HepG2 (cell line): ENCODE measurements at regions of chr7 and their contacts with region 1.

Region 1: DNA sequence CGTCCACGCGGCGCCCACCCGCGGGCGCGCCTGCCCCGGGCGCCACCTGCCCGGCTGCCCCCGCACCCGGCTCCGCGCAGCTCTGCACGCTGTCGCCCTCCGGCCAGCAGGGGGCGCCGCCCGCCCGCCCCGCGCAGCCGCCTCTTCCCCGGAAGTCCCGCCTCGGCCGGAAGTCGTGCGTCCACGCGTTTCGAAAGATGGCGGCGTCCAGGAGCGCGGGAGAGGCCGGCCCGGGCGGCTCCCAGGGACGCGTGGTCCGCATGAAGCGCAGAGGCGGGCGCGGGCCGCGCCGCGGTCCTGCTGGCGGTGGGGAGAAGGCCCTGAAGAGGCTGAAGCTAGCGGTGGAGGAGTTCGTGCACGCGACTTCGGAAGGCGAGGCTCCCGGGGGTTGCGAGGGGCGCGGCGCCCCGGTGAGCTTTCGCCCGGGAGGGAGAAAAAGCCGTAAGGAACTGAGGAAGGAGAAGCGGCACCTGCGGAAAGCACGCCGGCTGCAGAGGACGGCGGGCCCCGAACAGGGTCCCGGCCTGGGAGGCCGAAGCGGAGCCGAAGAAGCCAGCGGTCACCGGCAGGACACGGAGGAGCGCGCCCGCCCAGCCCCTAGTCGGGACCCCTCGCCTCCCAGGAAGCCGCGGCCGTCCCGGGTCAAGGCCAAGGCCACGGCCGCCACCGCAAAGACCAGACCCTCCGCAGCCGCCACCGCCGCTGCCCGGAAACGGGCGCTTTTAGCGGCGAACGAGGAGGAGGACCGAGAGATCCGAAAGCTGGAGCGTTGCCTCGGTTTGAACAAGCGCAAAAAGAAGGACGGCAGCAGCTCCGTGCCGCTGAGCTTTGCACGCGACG is at the start of gene NOM1:
- DNase-seq: peak; percentile 66
- ATAC-seq: peak; percentile 90
- H3K4me3 ChIP-seq: peak within 1 kb of the TSS; percentile 93 to 95 (median 93)
- H3K27ac ChIP-seq: peak within 1 kb of the TSS; percentile 74
- H3K4me1 ChIP-seq: peaks cover 30% of the 10 kb centered on the region
- H3K27me3 ChIP-seq: peaks cover 4 to 8% of the 10 kb centered on the region in 2 experiments; a peak in 3 of 5 replicates
- CTCF ChIP-seq: peak; percentile 79
- EP300 ChIP-seq: no peak
- POLR2A ChIP-seq: peak; percentile 72 to 74
- RAD21 ChIP-seq: peak; percentile 87
- total RNA-seq, gene NOM1: 17.3 and 26.2 TPM in 2 replicates

Region 2: GRCh38 chr7:156735851-156736250 is 213.9 kb before region 1 on chr7:
- CTCF ChIA-PET with region 1: no interaction called
- POLR2A ChIA-PET with region 1: no interaction called
- in situ Hi-C with region 1: no loop called
- intact Hi-C with region 1: no loop called
- DNase-seq: no peak
- ATAC-seq: no peak
- H3K4me3 ChIP-seq: no peak overlapping the region
- H3K27ac ChIP-seq: no peak overlapping the region
- H3K4me1 ChIP-seq: no peaks in the 10 kb centered on the region
- H3K27me3 ChIP-seq: no peaks in the 10 kb centered on the region
- CTCF ChIP-seq: no peak
- EP300 ChIP-seq: no peak
- POLR2A ChIP-seq: no peak
- RAD21 ChIP-seq: no peak

Region 3: GRCh38 chr7:156907656-156908055 is 42.1 kb before region 1 on chr7:
- CTCF ChIA-PET with region 1: interaction called, 4 read pairs
- POLR2A ChIA-PET with region 1: no interaction called
- in situ Hi-C with region 1: no loop called
- intact Hi-C with region 1: loop called (anchors 5 kb)
- DNase-seq: no peak
- ATAC-seq: no peak
- H3K4me3 ChIP-seq: no peak overlapping the region
- H3K27ac ChIP-seq: no peak overlapping the region
- H3K4me1 ChIP-seq: peaks cover 17% of the 10 kb centered on the region; the same call in 1 of the 2 replicates
- H3K27me3 ChIP-seq: 0 out of 5 replicates have a peak, but pooled peaks cover 0 to 4% of the 10 kb centered on the region in 2 experiments
- CTCF ChIP-seq: no peak
- EP300 ChIP-seq: no peak
- POLR2A ChIP-seq: no peak
- RAD21 ChIP-seq: no peak

Region 4: DNA sequence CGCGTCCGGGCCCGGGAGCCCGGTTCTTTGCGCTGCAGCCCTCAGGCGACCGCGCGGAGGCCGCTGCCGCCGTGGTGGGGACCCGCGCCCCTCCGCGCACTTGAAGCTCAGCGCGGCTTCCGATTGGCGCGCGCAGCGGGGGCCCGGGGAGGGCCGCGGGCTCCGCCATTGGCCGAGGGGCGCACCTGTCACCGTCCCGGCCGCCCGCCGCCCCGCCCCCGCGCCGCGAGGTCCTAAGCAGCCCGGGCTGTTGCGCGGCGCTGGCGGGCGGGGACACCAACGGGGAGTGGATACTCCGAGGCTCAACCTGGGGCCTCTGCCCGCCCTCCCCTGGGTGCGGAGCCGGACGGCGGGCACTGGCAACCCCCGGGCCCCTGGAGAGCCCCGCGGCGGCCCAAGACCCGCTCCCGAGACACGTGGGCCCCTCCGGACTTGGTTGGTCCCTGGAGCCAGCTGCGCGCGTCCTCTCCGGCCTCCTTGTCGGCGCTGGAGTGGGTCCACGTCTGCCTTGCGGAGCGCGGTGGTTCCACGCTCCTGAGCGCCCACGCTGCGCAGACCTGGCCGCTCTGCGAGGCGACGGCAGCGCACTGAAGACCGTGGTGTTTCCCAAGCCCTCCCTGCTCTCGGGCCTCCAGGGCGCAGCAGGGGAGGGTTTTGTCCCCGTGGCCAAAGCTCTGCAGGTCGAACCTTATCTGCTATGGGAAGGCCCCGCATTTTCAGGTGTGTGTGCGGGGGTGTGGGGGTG is 61.0 kb after region 1 on chr7 and contains the start of gene MNX1:
- CTCF ChIA-PET with region 1: no interaction called
- POLR2A ChIA-PET with region 1: no interaction called
- in situ Hi-C with region 1: no loop called
- intact Hi-C with region 1: loop called (anchors 5 kb)
- DNase-seq: peak; percentile 57
- ATAC-seq: peak; percentile 80
- H3K4me3 ChIP-seq: peak within 1 kb of the TSS; percentile 65 to 75 (median 67); a peak in 5 of 6 replicates
- H3K27ac ChIP-seq: peak within 1 kb of the TSS; percentile 83
- H3K4me1 ChIP-seq: peaks cover 66% of the 10 kb centered on the region
- H3K27me3 ChIP-seq: peaks cover 6 to 51% of the 10 kb centered on the region in 2 experiments; a peak in 4 of 5 replicates
- CTCF ChIP-seq: no peak
- EP300 ChIP-seq: no peak
- POLR2A ChIP-seq: peak in 1 of 2 experiments; percentile 67; a peak in 3 of 4 replicates
- RAD21 ChIP-seq: no peak
- total RNA-seq, gene MNX1: 3.6 and 6.1 TPM in 2 replicates

Region 5: DNA sequence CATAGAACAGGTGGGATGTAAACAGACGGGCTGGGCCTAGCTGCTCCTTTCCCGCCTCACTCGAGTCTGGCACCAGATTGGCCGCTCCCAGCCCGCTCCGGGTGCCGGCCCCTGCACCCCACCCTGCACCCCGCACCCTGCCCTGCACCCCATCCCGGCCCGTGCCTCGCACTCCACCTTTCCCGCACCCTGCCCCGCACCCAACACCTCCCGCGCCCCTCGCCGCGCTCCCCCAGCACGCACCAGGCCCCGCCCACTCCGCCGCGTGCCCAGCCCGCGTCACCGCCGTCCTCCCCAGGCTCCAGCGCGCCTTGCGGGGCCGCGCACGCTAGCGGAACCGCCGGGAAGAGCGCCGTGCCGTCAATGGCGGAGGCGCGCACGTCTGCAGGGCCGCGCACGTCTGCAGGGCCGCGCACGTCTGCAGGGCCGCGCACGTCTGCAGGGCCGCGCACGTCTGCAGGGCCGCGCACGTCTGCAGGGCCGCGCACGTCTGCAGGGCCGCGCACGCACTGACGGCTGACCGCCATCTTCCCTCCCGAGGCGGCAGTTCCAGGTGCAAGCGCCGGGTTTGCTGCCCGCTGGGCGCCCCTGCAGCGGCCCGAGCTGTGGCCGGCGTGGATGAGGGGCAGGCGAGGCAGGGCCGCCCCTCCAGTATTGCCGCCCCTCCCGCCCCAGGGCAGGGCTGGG is 188.8 kb after region 1 on chr7 and contains the start of gene UBE3C:
- CTCF ChIA-PET with region 1: no interaction called
- POLR2A ChIA-PET with region 1: no interaction called
- in situ Hi-C with region 1: loop called (anchors 5 kb)
- intact Hi-C with region 1: no loop called
- DNase-seq: peak; percentile 74
- ATAC-seq: peak; percentile 84
- H3K4me3 ChIP-seq: peak within 1 kb of the TSS; percentile 79 to 93 (median 88)
- H3K27ac ChIP-seq: peak within 1 kb of the TSS; percentile 89
- H3K4me1 ChIP-seq: peaks cover 53% of the 10 kb centered on the region
- H3K27me3 ChIP-seq: no peaks in the 10 kb centered on the region; a peak in 1 of 5 replicates
- CTCF ChIP-seq: no peak
- EP300 ChIP-seq: no peak
- POLR2A ChIP-seq: peak; percentile 46 to 84; a peak in 3 of 4 replicates
- RAD21 ChIP-seq: peak; percentile 54; the same call in 1 of the 2 replicates
- total RNA-seq, gene UBE3C: 48.2 and 49.8 TPM in 2 replicates

Region 6: DNA sequence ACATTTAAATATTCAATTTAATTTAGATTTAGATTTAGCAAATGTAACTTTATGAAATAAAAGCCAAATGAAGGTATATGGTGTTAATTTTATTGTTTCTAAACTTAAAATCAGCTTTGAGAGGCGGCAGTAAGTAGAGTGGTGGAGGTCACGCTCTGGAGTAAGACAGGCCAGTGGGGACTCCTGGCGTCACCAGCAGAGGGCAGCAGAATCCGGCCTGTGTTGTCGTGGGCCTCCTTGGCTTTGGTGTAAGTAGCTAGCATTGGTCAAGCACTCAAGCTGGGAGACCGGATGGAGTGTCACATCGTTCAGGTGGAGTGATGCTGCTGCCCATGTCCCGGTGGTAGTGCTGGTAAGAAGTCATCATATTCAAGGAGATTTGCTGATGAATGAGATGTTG is 288.3 kb after region 1 on chr7:
- CTCF ChIA-PET with region 1: no interaction called
- POLR2A ChIA-PET with region 1: no interaction called
- in situ Hi-C with region 1: no loop called
- intact Hi-C with region 1: no loop called
- DNase-seq: no peak
- ATAC-seq: peak; percentile 75
- H3K4me3 ChIP-seq: no peak overlapping the region
- H3K27ac ChIP-seq: no peak overlapping the region
- H3K4me1 ChIP-seq: 0 out of 2 replicates have a peak, but pooled peaks cover 19% of the 10 kb centered on the region
- H3K27me3 ChIP-seq: no peaks in the 10 kb centered on the region
- CTCF ChIP-seq: peak; percentile 63
- EP300 ChIP-seq: no peak
- POLR2A ChIP-seq: no peak
- RAD21 ChIP-seq: no peak

Region 7: GRCh38 chr7:157273208-157274093 is 323.7 kb after region 1 on chr7:
- CTCF ChIA-PET with region 1: no interaction called
- POLR2A ChIA-PET with region 1: no interaction called
- in situ Hi-C with region 1: loop called (anchors 25 kb)
- intact Hi-C with region 1: no loop called
- DNase-seq: peak; percentile 58
- ATAC-seq: peak; percentile 73
- H3K4me3 ChIP-seq: peak overlapping the region in 1 of 3 experiments; percentile 13; a peak in 1 of 6 replicates
- H3K27ac ChIP-seq: no peak overlapping the region
- H3K4me1 ChIP-seq: peaks cover 60% of the 10 kb centered on the region
- H3K27me3 ChIP-seq: peaks cover 0 to 4% of the 10 kb centered on the region in 2 experiments; a peak in 1 of 5 replicates
- CTCF ChIP-seq: peak; percentile 98
- EP300 ChIP-seq: no peak
- POLR2A ChIP-seq: no peak
- RAD21 ChIP-seq: peak; percentile 97